Gastrocnemius medialis (tissue), 4 donors: ENCODE measurements at regions of chr2 and their contacts with region 1.

Region 1: GRCh38 chr2:202033321-202034248 is at the start of gene FZD7:
- DNase-seq: peak; percentile 90 to 92
- ATAC-seq: peak; percentile 60 to 63
- H3K4me3 ChIP-seq: peak within 1 kb of the TSS; percentile 80 to 97 (median 92)
- H3K27ac ChIP-seq: peak within 1 kb of the TSS; percentile 98 to 100 (median 99)
- H3K4me1 ChIP-seq: peaks cover 33 to 45% of the 10 kb centered on the region in 2 donors
- H3K27me3 ChIP-seq: no peaks in the 10 kb centered on the region
- CTCF ChIP-seq: peak in 3 of 5 experiments; percentile 14 to 44 (median 27)
- POLR2A ChIP-seq: peak; percentile 95 to 97
- total RNA-seq, gene FZD7: 4.4 to 9.4 (median 6.4) TPM

Region 2: DNA sequence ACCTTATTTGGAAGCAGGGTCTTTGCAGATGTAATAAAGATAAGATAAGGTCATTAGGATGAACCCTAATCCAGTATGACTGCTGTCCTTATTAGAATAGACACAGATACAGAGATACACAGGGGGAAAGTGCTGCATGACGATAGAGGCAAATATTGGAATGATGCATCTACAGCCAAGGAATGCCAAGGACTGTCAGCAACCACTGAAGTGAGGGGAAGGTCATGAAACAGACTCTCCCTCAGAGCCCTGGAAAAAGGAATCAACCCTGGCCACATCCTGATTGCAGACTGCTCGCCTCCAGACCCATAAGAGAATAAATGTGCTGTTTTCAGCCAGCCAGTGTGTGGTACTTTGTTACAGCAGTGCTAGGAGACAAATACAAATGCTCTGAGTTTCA is 405.0 kb before region 1 on chr2:
- in situ Hi-C with region 1: no loop called
- intact Hi-C with region 1: no loop called
- DNase-seq: no peak
- ATAC-seq: no peak
- H3K4me3 ChIP-seq: no peak overlapping the region
- H3K27ac ChIP-seq: no peak overlapping the region
- H3K4me1 ChIP-seq: no peaks in the 10 kb centered on the region
- H3K27me3 ChIP-seq: no peaks in the 10 kb centered on the region
- CTCF ChIP-seq: no peak
- POLR2A ChIP-seq: no peak

Region 3: DNA sequence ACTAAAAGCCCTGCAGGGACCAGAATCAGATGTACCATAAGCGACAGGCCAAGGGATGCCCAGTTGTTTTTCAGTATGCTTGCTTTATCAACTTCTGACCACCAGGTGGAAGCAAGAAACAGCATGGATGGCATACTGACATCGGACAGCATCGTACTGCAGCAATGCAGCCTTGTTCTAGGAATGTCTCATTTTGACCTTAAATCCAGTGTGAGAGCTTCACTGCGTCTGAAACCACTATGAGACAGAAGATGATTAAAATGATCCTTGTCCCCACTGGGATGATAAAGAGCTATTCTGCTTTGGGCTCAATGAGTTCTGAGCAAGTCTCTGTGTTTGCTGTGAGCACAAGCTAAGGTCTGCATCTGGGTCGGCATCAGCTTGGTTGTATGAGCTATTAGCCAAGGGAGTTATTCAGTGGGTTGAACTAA is 172.9 kb before region 1 on chr2:
- in situ Hi-C with region 1: no loop called
- intact Hi-C with region 1: loop called (anchors 2 kb)
- DNase-seq: peak; percentile 9 to 30
- ATAC-seq: peak; percentile 89 to 91
- H3K4me3 ChIP-seq: no peak overlapping the region
- H3K27ac ChIP-seq: no peak overlapping the region
- H3K4me1 ChIP-seq: peaks cover 0 to 5% of the 10 kb centered on the region in 2 donors
- H3K27me3 ChIP-seq: no peaks in the 10 kb centered on the region
- CTCF ChIP-seq: peak; percentile 54 to 87 (median 84)
- POLR2A ChIP-seq: no peak

Region 4: GRCh38 chr2:201933792-201934237 is 99.8 kb before region 1 on chr2:
- in situ Hi-C with region 1: no loop called
- intact Hi-C with region 1: loop called (anchors 5 kb)
- DNase-seq: peak; percentile 27 to 58
- ATAC-seq: peak; percentile 81 to 92
- H3K4me3 ChIP-seq: peak overlapping the region in 3 of 4 donors; percentile 5 to 25 (median 7)
- H3K27ac ChIP-seq: peak overlapping the region; percentile 65 to 83 (median 78)
- H3K4me1 ChIP-seq: peaks cover 23 to 30% of the 10 kb centered on the region in 2 donors
- H3K27me3 ChIP-seq: no peaks in the 10 kb centered on the region
- CTCF ChIP-seq: no peak
- POLR2A ChIP-seq: no peak

Region 5: DNA sequence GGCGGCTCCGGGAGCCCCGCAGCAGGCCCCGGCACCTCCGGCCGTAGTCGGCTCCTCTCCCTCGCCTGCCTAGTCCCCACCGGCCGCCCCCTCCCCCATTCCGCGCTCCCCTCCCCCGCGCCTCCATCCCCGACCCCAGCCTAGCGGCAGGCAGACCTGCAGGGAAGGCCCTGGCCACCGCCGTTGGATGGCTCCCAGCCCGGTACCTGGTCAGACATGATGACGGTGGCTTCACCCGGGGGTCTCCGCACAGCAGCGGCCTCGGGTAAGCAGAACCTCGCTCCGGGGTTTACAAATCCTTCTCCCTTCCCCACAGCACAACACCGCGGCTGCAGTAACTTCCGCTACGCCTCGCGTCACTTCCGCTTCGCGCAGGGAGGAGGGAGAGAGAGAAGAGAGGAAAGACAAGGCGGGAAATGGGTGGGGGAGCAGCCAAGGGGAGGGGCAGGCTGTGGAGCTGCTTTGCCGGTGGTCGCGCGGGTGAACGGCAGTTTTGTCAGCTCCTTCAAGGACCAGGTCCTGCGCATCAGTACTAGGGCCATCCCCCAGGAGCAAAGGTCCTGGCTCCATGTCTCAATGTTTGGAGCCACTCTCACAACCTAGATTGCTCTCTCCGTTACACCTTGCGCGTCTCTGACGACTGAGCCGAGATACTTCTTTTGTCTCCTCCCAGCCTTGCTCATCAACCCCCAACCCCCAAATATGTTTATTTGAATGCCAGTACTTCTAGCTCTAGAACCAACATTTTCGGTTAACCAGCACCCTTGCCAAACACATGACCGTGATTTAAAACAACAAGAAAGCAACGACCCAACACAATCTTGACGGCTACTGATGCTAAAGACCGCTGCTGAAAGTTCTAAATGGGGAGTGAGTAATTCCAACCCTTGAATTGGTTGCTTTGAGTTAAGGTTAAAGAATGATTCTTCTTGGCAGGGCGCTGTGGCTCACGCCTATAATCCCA is 204.9 kb after region 1 on chr2 and contains the start of gene SUMO1:
- in situ Hi-C with region 1: no loop called
- intact Hi-C with region 1: loop called (anchors 5 kb)
- DNase-seq: peak; percentile 77 to 86
- ATAC-seq: peak; percentile 96 to 97
- H3K4me3 ChIP-seq: peak within 1 kb of the TSS; percentile 92 to 100 (median 96)
- H3K27ac ChIP-seq: peak within 1 kb of the TSS; percentile 91 to 100 (median 99)
- H3K4me1 ChIP-seq: peaks cover 23 to 28% of the 10 kb centered on the region in 2 donors
- H3K27me3 ChIP-seq: no peaks in the 10 kb centered on the region
- CTCF ChIP-seq: no peak
- POLR2A ChIP-seq: peak; percentile 70 to 75
- total RNA-seq, gene SUMO1: 44.0 to 62.4 (median 52.7) TPM

Region 6: GRCh38 chr2:202375609-202376408 is 342.2 kb after region 1 on chr2 and contains the start of gene BMPR2:
- in situ Hi-C with region 1: no loop called
- intact Hi-C with region 1: loop called (anchors 5 kb)
- DNase-seq: peak; percentile 86 to 91
- ATAC-seq: peak; percentile 78 to 81
- H3K4me3 ChIP-seq: peak within 1 kb of the TSS; percentile 82 to 95 (median 90)
- H3K27ac ChIP-seq: peak within 1 kb of the TSS; percentile 89 to 99 (median 97)
- H3K4me1 ChIP-seq: peaks cover 19 to 22% of the 10 kb centered on the region in 2 donors
- H3K27me3 ChIP-seq: no peaks in the 10 kb centered on the region
- CTCF ChIP-seq: no peak
- POLR2A ChIP-seq: peak; percentile 85 to 92
- total RNA-seq, gene BMPR2: 25.0 to 35.0 (median 27.2) TPM